ENCODE measurements at regions of chr13 and their contacts with region 1.

Region 1: DNA sequence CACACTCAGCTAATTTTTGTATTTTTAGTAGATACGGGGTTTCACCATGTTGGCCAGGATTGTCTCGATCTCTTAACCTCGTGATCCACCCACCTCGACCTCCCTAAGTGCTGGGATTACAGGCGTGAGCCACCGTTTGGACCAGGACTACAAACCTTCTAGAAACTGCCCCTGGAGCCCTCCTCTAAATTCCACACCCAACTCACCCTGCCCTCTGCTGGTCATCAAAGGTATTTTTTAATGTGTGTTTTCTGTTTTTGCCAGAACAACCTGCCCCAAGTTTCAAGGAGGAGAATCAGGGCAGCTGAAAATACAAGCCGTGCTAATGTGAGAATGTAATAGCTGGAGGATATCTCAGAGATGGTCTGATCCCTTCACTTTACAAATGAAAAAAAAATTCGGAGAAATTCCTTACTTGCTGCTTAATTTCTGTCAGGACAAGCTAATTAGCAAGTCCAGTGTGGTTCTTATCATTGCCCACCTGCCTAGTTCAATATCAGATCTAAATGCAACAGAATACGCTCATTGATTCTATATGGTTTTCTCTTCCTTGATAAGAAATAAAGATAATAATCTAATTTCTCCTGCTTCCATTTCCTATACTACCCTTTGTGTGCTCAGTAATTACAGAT is 4.1 kb downstream of the ATP8A2 start:
- DNase-seq: peak; percentile 76
- H3K4me3 ChIP-seq: no peak overlapping the region
- H3K27ac ChIP-seq: no peak overlapping the region
- H3K4me1 ChIP-seq: peaks cover 5% of the 10 kb centered on the region
- H3K27me3 ChIP-seq: peaks cover 12% of the 10 kb centered on the region
- CTCF ChIP-seq: peak; percentile 70

Region 2: GRCh38 chr13:25001476-25002206 is 374.2 kb before region 1 on chr13:
- CTCF ChIA-PET with region 1: no interaction called
- POLR2A ChIA-PET with region 1: no interaction called
- intact Hi-C with region 1: loop called (anchors 5 kb)
- DNase-seq: no peak
- H3K4me3 ChIP-seq: no peak overlapping the region
- H3K27ac ChIP-seq: no peak overlapping the region
- H3K4me1 ChIP-seq: no peaks in the 10 kb centered on the region
- H3K27me3 ChIP-seq: no peaks in the 10 kb centered on the region
- CTCF ChIP-seq: no peak

Region 3: DNA sequence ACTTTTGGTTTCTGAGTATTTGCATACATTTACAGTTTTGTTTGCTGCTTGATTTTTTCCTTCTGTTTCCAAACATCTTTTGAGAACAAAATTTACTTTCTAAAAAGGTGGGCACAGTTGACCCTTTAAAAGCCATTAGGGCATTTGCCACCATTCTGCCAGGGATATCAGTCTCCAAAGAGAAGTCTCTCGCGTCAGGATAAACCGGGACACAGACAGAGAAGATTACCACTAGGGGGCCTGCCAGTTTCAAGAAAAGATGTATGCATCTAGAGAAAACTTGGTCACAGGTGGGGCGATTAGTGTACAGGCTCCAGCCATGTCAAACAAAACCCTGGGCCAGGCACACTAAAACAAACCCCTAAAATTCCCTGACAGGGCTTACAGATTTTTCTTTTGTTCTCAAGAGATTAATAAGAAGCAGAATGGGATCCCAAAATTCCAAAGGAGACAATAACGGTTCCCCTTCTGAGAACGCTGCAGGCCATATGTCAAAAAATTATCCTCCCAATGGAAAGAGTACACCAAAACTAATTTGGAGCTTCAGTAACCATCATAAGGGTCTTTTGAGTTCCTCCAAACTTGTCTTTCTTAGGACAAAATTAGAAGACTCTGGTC is 290.6 kb before region 1 on chr13:
- CTCF ChIA-PET with region 1: no interaction called
- POLR2A ChIA-PET with region 1: no interaction called
- intact Hi-C with region 1: loop called (anchors 10 kb)
- DNase-seq: peak; percentile 72
- H3K4me3 ChIP-seq: no peak overlapping the region
- H3K27ac ChIP-seq: no peak overlapping the region
- H3K4me1 ChIP-seq: no peaks in the 10 kb centered on the region
- H3K27me3 ChIP-seq: no peaks in the 10 kb centered on the region
- CTCF ChIP-seq: peak; percentile 88

Region 4: DNA sequence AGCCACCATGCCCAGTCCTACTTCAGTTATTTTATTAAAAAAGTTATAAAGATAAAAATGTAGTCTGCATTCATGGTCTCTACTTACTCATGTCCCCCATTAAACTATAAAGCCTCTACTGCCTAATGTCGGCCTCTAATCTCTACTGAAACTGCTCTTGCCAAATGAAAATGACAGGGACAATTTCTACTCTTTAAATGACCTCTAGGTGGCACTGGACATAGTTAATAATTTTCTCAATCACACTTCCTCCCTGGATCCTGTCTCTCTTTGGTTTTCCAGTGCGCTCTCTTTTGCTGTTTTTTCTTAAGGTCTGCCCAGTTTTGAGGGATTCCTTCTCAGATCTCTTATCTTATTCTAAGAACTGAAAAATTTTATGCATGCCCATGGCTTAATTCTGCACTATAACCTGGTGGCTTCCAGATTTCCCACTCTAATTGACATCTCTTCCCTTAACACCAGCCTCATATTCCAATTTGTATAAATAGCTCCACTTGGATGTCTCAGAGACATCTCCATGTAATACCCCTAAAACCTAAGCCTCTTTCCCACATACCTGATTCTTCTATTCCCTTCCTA is 142.8 kb before region 1 on chr13:
- CTCF ChIA-PET with region 1: no interaction called
- POLR2A ChIA-PET with region 1: no interaction called
- intact Hi-C with region 1: loop called (anchors 10 kb)
- DNase-seq: peak; percentile 70
- H3K4me3 ChIP-seq: no peak overlapping the region
- H3K27ac ChIP-seq: no peak overlapping the region
- H3K4me1 ChIP-seq: peaks cover 11% of the 10 kb centered on the region
- H3K27me3 ChIP-seq: no peaks in the 10 kb centered on the region
- CTCF ChIP-seq: peak; percentile 68